ENCODE measurements at regions of chr3 and their contacts with region 1.

Region 1: DNA sequence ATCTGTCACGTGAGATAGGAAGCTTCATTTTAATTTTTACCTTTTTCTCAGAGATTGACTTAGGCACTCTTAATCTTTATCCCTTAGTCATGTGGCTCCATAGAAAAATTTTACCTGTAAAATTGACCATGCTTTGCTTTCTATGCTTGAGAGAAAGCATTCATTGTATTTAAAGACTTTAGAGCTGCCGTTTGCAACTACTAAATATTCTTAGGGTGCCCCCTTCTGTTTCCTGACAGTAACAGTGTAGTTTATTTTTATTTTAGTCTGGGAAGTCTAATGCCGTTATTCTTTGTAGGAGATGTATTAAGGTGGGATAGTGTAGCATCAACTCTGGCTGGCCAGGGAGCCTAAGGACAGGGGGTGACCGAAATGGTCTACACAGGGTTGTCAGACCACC is 84.5 kb upstream of the SYNPR start:
- DNase-seq: no peak
- ATAC-seq: peak; percentile 40
- H3K4me3 ChIP-seq: no peak overlapping the region
- H3K27ac ChIP-seq: no peak overlapping the region
- H3K4me1 ChIP-seq: peaks cover 20% of the 10 kb centered on the region
- H3K27me3 ChIP-seq: no peaks in the 10 kb centered on the region
- CTCF ChIP-seq: peak in 6 of 7 experiments; percentile 30 to 67 (median 56)
- POLR2A ChIP-seq: no peak

Region 2: DNA sequence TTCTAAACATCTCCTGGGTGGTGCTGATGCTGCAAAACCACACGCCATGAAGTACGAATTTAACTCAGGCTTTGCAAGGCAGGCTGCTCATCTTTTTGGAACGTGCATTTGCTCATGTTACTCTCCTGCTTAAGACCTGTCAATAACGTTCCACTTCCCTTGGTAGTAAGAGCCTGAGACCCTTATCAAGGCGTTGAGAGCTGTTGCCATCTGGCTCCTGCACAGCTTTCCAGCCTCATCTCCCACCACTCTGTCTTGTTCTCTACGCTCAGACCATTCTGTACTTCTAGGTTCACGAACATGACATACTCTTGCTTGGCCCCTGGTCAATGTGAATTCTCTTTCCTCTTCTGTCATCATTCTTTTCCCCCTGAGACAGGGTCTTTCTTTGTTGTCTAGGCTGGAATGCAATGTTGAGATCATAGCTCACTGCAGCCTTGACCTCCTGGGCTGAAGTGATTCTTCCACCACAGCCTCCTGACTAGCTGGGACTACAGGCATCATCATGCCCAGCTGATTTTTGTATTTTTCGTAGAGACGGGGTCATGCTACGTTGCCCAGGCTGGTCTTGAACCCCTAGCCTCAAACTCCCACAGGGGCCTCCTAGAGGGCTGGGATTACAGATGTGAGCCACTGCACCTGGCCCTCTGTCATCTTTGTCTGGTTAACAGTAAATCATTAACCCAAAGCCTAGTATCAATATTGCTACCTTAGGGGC is 521.2 kb before region 1 on chr3:
- intact Hi-C with region 1: loop called (anchors 10 kb)
- DNase-seq: no peak
- ATAC-seq: no peak
- H3K4me3 ChIP-seq: no peak overlapping the region
- H3K27ac ChIP-seq: no peak overlapping the region
- H3K4me1 ChIP-seq: peaks cover 14% of the 10 kb centered on the region
- H3K27me3 ChIP-seq: no peaks in the 10 kb centered on the region
- CTCF ChIP-seq: no peak
- POLR2A ChIP-seq: no peak

Region 3: DNA sequence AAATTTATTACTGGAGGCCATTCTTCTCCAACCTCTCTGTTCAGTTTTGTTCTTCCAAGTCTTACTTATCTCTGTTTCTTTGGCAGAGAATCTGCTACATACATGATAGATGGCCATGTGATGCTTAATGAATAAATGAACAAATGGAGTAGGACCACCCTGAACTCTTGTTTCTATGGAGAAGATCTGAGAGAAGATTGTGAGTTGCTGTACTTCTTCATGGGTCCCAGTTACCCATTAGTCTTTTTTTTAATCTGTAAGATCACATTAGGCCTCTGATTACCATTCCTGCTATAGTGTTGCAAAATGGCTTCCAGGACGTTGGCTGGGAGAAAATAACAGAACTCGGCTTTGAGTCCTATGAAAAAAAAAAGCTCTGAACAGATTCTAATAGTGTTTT is 107.4 kb before region 1 on chr3:
- intact Hi-C with region 1: no loop called
- DNase-seq: no peak
- ATAC-seq: no peak
- H3K4me3 ChIP-seq: no peak overlapping the region
- H3K27ac ChIP-seq: no peak overlapping the region
- H3K4me1 ChIP-seq: peaks cover 17% of the 10 kb centered on the region
- H3K27me3 ChIP-seq: no peaks in the 10 kb centered on the region
- CTCF ChIP-seq: no peak
- POLR2A ChIP-seq: no peak

Region 4: DNA sequence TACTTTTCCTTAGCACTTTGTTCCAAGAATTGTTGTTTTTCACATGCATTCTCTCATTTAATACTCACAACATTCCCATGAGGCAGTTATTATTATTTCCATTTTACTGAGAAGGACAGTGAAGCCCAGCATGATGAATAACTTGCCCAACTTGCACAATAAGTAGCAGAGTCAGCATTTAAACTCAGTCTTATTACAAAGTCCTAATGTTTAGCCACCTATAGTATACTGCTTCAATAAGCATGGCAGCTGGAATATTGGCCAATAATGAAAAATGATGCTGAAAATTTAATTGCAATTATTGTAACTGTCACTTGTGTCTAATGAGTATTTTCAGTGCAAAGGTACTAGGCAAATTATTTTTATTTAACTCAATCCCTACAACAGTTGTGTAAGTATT is 130.2 kb after region 1 on chr3:
- intact Hi-C with region 1: no loop called
- DNase-seq: no peak
- ATAC-seq: no peak
- H3K4me3 ChIP-seq: no peak overlapping the region
- H3K27ac ChIP-seq: no peak overlapping the region
- H3K4me1 ChIP-seq: no peaks in the 10 kb centered on the region
- H3K27me3 ChIP-seq: no peaks in the 10 kb centered on the region
- CTCF ChIP-seq: no peak
- POLR2A ChIP-seq: no peak

Measured in body of pancreas (tissue), 4 donors.